ENCODE measurements at regions of chr3 and their contacts with region 1.

Region 1: GRCh38 chr3:12841149-12841970 is at the start of gene RPL32:
- DNase-seq: peak; percentile 92
- ATAC-seq: peak; percentile 90
- H3K4me3 Mint-ChIP-seq: peak within 1 kb of the TSS; percentile 98
- H3K27ac Mint-ChIP-seq: peak within 1 kb of the TSS; percentile 99
- H3K4me1 Mint-ChIP-seq: peaks cover 43% of the 10 kb centered on the region
- H3K27me3 Mint-ChIP-seq: no peaks in the 10 kb centered on the region
- total RNA-seq, gene RPL32: 2,842 to 4,727 TPM

Region 2: DNA sequence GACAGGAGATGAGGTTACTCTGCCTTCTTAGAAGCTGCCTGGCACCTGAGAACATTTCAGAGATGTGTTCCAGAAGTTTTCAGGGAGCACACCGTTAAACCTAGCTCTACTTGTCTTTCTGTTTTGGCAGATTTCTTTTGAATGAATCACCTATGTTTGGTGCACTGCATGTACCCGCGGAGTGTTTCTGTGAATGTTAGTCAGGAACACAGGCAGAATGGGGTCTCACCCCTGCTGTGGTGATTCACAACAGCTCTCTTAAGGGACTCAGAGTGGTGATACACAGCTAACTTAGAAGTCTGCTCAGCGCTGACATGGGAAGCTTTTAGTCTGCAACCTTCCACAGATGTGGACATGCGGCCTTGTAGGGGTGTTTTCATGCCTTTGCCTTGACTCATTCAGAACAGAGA is 333.1 kb before region 1 on chr3:
- CTCF ChIA-PET with region 1: no interaction called
- POLR2A ChIA-PET with region 1: no interaction called
- intact Hi-C with region 1: no loop called
- DNase-seq: no peak
- ATAC-seq: no peak
- H3K4me3 Mint-ChIP-seq: no peak overlapping the region
- H3K27ac Mint-ChIP-seq: no peak overlapping the region
- H3K4me1 Mint-ChIP-seq: no peaks in the 10 kb centered on the region
- H3K27me3 Mint-ChIP-seq: no peaks in the 10 kb centered on the region

Region 3: DNA sequence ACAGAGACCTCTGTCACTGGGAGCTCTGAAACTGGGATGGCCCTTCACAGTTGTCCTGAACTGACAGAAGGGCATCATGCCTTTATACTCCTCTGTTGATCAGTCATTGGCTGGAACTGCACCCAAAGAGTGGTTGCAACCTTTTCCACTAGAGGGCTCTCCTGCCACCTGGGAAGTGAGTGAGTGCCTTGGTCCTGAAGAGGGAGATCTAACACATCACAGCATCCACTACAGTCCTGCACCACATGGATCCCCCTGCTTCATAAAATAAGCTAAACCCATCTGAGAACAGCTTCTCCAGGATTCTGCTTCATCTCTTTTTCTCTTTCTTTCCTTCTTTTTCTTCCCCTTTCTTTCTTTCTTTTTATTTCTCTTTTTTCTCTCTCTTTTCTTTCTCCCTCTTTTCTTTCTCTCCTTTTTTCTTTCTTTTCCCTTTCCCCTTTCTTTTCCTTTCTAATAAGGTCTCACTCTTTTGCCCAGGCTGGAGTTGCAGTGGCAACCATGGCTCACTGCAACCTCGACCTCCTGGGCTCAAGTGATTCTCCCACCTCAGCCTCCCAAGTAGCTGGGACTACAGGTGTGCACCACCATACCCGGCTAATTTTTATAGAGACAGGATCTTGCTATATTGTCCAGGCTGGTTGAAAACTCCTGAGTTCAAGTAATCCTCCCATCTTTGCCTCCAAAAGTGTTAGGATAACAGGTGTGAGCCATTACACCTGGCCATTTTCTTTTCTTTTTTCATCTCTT is 134.7 kb before region 1 on chr3:
- CTCF ChIA-PET with region 1: interaction called, 5 read pairs
- POLR2A ChIA-PET with region 1: no interaction called
- intact Hi-C with region 1: loop called in 1 of 2 experiments (anchors 1 kb)
- DNase-seq: peak; percentile 79
- ATAC-seq: peak; percentile 100
- H3K4me3 Mint-ChIP-seq: no peak overlapping the region
- H3K27ac Mint-ChIP-seq: no peak overlapping the region
- H3K4me1 Mint-ChIP-seq: no peaks in the 10 kb centered on the region
- H3K27me3 Mint-ChIP-seq: no peaks in the 10 kb centered on the region

Region 4: DNA sequence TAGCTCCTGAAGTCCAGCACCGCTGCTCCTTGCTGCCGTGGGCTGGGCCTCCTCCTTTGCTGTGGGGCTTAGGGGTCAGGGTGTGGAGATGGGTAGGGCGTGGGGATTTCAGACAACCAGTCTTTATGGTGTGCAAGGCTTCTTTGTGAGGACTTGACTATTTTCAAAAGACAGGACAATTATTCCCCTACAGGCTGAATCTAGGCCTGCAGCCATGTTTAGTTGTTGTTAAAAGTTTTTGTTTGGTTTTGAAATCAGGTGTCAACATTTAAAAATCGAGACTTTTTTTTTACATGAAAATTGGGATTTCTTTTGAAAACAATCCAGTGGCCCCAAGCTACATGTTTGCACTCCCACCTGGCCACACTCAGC is 10.6 kb before region 1 on chr3:
- CTCF ChIA-PET with region 1: interaction called, 22 read pairs
- POLR2A ChIA-PET with region 1: interaction called, 26 read pairs
- intact Hi-C with region 1: no loop called
- DNase-seq: no peak
- ATAC-seq: no peak
- H3K4me3 Mint-ChIP-seq: no peak overlapping the region
- H3K27ac Mint-ChIP-seq: no peak overlapping the region
- H3K4me1 Mint-ChIP-seq: no peaks in the 10 kb centered on the region
- H3K27me3 Mint-ChIP-seq: no peaks in the 10 kb centered on the region

Region 5: GRCh38 chr3:12868039-12869034 is 27.0 kb after region 1 on chr3:
- CTCF ChIA-PET with region 1: interaction called, 5 read pairs
- POLR2A ChIA-PET with region 1: interaction called, 3 read pairs
- intact Hi-C with region 1: loop called in 1 of 2 experiments (anchors 1 kb)
- DNase-seq: peak; percentile 79
- ATAC-seq: peak; percentile 88
- H3K4me3 Mint-ChIP-seq: peak overlapping the region; percentile 72
- H3K27ac Mint-ChIP-seq: peak overlapping the region; percentile 71
- H3K4me1 Mint-ChIP-seq: peaks cover 9% of the 10 kb centered on the region
- H3K27me3 Mint-ChIP-seq: peaks cover 8% of the 10 kb centered on the region

Region 6: GRCh38 chr3:13262493-13263211 is 421.3 kb after region 1 on chr3:
- CTCF ChIA-PET with region 1: no interaction called
- POLR2A ChIA-PET with region 1: no interaction called
- intact Hi-C with region 1: no loop called
- DNase-seq: no peak
- ATAC-seq: no peak
- H3K4me3 Mint-ChIP-seq: no peak overlapping the region
- H3K27ac Mint-ChIP-seq: no peak overlapping the region
- H3K4me1 Mint-ChIP-seq: peaks cover 9% of the 10 kb centered on the region
- H3K27me3 Mint-ChIP-seq: no peaks in the 10 kb centered on the region